ENCODE measurements at regions of chr18 and their contacts with region 1.

Region 1: DNA sequence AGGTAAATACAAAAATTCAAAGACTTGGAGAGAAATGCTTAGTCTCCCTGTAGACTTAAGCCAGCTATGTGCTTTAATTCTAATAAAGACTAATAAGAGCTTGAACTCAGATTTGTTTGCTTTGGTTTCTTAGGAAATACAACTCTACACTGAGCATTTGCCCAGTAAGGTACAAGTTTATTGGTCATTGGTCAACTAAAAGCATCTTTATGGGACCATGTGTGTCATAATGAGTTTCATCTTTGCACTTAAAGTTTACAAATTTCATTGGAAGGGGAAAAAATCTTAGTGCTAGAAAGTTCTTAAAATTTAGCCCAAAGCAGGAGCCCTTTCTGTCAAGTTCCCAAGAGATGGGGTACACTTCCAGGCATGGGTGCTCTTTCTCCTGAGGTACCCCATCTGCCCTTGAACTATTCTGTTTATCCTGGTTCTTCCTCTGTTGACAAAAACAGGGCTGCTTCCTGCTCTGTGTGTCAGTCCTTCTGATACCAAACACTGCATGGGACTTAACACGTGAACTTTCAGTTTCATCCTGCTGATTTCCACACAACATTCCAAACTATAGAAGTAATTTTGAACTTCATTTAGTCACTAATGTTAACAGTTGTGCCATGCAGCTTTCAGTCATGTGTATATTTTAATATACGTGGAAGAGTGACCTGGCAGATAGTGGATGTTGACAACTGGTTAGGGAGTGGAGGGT is 200.2 kb downstream of the TPGS2 start:
- DNase-seq: no peak
- H3K4me3 ChIP-seq: no peak overlapping the region
- H3K27ac ChIP-seq: peak overlapping the region in 1 of 2 donors; percentile 44
- H3K4me1 ChIP-seq: no peaks in the 10 kb centered on the region
- H3K27me3 ChIP-seq: no peaks in the 10 kb centered on the region
- CTCF ChIP-seq: no peak
- POLR2A ChIP-seq: no peak

Region 2: GRCh38 chr18:36139250-36139649 is 489.3 kb before region 1 on chr18:
- intact Hi-C with region 1: no loop called
- DNase-seq: no peak
- H3K4me3 ChIP-seq: no peak overlapping the region
- H3K27ac ChIP-seq: no peak overlapping the region
- H3K4me1 ChIP-seq: no peaks in the 10 kb centered on the region
- H3K27me3 ChIP-seq: no peaks in the 10 kb centered on the region
- CTCF ChIP-seq: no peak
- POLR2A ChIP-seq: no peak

Region 3: DNA sequence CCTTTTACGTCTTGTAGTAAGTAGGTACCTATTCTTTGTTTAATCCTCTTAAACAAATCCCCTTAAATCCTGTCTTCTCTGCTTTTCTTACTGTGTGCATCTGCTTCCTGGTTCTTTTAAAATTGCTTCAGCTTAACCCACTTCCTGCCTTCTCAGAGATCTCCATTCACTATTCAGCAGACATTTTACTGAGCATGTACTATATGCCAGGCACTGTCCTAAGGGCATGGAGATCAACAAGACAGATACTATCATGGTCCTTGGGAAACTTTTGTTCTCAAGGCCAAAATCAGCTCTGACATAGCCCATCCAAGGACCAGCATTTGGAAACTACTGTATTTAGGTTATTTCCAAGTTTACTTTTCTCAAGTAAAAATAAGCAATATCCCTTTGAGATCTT is 27.3 kb before region 1 on chr18:
- intact Hi-C with region 1: no loop called
- DNase-seq: no peak
- H3K4me3 ChIP-seq: no peak overlapping the region
- H3K27ac ChIP-seq: no peak overlapping the region
- H3K4me1 ChIP-seq: no peaks in the 10 kb centered on the region
- H3K27me3 ChIP-seq: no peaks in the 10 kb centered on the region
- CTCF ChIP-seq: no peak
- POLR2A ChIP-seq: no peak

Region 4: GRCh38 chr18:36661999-36662398 is 33.4 kb after region 1 on chr18:
- intact Hi-C with region 1: loop called (anchors 1 kb)
- DNase-seq: no peak
- H3K4me3 ChIP-seq: no peak overlapping the region
- H3K27ac ChIP-seq: no peak overlapping the region
- H3K4me1 ChIP-seq: no peaks in the 10 kb centered on the region
- H3K27me3 ChIP-seq: no peaks in the 10 kb centered on the region
- CTCF ChIP-seq: no peak
- POLR2A ChIP-seq: no peak

Region 5: DNA sequence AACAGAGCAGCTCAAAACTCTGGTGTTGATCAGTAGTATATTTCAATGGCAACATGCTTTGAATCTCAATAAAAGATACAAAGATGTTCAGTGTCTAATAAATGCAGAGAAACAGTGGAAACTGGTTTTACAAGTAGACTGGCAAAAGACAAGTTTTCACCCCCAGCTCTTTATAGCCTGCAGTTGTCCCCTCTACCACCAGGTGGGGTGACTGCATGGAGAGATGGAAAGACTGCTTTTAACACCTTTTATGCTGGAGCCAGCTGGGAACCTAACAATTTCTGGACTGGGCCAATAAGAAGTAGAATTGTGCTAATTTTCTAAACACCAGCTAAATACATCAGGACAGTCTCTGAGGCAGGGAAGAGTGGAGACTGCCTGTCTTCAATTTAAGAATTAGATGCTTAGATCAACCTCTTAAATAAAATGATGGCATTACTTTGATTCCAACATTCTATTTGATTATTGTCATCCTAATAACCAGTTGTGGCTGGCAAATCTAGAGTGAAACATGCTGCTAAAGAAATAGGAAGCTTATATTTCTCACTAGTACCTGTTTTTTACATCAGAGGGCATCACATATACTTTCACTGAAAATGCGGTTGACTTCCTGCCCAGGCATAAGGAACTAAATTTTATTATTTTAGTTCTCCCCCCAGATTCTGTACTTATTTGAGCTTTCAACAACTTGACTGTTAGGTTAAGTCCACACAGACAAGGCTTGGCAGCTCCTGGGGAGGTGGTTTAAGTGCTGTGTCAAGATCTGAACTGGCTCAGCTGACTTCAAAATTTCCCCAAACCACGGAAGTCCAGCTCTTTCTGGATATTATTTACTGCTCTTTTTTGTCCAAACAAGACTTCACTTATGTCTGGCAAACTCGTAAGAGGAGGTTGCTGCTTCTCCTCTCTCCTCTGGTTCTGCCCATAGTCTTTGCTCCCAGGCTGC is 59.7 kb after region 1 on chr18:
- intact Hi-C with region 1: no loop called
- DNase-seq: peak in 1 of 2 donors; percentile 67
- H3K4me3 ChIP-seq: no peak overlapping the region
- H3K27ac ChIP-seq: no peak overlapping the region
- H3K4me1 ChIP-seq: no peaks in the 10 kb centered on the region
- H3K27me3 ChIP-seq: no peaks in the 10 kb centered on the region
- CTCF ChIP-seq: peak; percentile 78 to 82 (median 79)
- POLR2A ChIP-seq: no peak

Measured in breast epithelium (tissue), 4 donors.